ENCODE measurements at regions of chrX and their contacts with region 1.

Region 1: DNA sequence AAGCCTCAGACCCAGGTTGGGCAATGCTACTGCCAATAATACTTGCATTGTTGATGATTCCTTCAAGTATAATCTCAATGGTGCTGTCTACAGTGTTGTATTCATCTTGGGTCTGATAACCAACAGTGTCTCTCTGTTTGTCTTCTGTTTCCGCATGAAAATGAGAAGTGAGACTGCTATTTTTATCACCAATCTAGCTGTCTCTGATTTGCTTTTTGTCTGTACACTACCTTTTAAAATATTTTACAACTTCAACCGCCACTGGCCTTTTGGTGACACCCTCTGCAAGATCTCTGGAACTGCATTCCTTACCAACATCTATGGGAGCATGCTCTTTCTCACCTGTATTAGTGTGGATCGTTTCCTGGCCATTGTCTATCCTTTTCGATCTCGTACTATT is 7.4 kb downstream of the LPAR4 start:
- DNase-seq: peak; percentile 61
- ATAC-seq: peak; percentile 95
- H3K4me3 ChIP-seq: peak overlapping the region; percentile 34 to 53 (median 40)
- H3K4me3 Mint-ChIP-seq: peak overlapping the region; percentile 80
- H3K27ac ChIP-seq: peak overlapping the region; percentile 62 to 70
- H3K27ac Mint-ChIP-seq: peak overlapping the region; percentile 92
- H3K4me1 ChIP-seq: peaks cover 38 to 42% of the 10 kb centered on the region in 2 donors
- H3K4me1 Mint-ChIP-seq: peaks cover 40% of the 10 kb centered on the region
- H3K27me3 ChIP-seq: no peaks in the 10 kb centered on the region
- H3K27me3 Mint-ChIP-seq: no peaks in the 10 kb centered on the region
- CTCF ChIP-seq: no peak

Region 2: GRCh38 chrX:78139160-78140123 is 615.5 kb before region 1 on chrX and contains the start of gene TAF9B:
- CTCF ChIA-PET with region 1: no interaction called
- POLR2A ChIA-PET with region 1: no interaction called
- intact Hi-C with region 1: loop called (anchors 10 kb)
- DNase-seq: peak; percentile 77
- ATAC-seq: peak; percentile 95
- H3K4me3 ChIP-seq: peak within 1 kb of the TSS; percentile 34 to 83 (median 77)
- H3K4me3 Mint-ChIP-seq: peak within 1 kb of the TSS; percentile 95
- H3K27ac ChIP-seq: peak within 1 kb of the TSS; percentile 44 to 71
- H3K27ac Mint-ChIP-seq: peak within 1 kb of the TSS; percentile 90
- H3K4me1 ChIP-seq: peaks cover 0 to 3% of the 10 kb centered on the region in 2 donors
- H3K4me1 Mint-ChIP-seq: peaks cover 6% of the 10 kb centered on the region
- H3K27me3 ChIP-seq: no peaks in the 10 kb centered on the region
- H3K27me3 Mint-ChIP-seq: no peaks in the 10 kb centered on the region
- CTCF ChIP-seq: no peak
- total RNA-seq, gene TAF9B: 12.2 and 13.7 TPM in 2 replicates

Region 3: DNA sequence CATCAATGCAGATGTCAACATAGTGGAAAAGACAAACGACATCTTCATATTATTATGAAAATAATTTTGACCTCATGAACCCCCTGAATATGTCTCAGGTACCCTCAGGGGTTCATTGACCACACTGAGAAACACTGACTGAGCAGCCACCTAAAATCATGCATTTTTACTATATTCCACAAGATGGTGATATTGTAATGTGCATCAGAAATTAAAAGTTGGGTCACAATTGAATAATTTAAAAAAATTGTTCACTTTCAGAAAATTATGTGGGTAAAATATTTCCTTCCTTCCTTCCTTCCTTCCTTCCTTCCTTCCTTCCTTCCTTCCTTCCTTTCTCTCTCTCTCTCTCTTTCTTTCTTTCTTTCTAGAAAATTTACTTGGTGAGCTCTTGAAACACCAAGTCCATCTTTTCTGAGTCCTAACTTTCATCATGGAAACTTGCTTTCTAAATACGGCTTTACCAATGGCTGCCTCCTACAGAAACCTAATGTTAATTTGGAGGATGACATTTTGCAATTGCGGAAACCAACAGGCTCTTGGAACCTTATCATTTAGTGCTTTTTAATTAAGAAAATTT is 199.4 kb before region 1 on chrX:
- CTCF ChIA-PET with region 1: interaction called, 8 read pairs
- POLR2A ChIA-PET with region 1: no interaction called
- intact Hi-C with region 1: loop called (anchors 2 kb)
- DNase-seq: peak; percentile 44
- ATAC-seq: no peak
- H3K4me3 ChIP-seq: no peak overlapping the region
- H3K4me3 Mint-ChIP-seq: no peak overlapping the region
- H3K27ac ChIP-seq: no peak overlapping the region
- H3K27ac Mint-ChIP-seq: no peak overlapping the region
- H3K4me1 ChIP-seq: no peaks in the 10 kb centered on the region
- H3K4me1 Mint-ChIP-seq: peaks cover 17% of the 10 kb centered on the region
- H3K27me3 ChIP-seq: no peaks in the 10 kb centered on the region
- H3K27me3 Mint-ChIP-seq: no peaks in the 10 kb centered on the region
- CTCF ChIP-seq: peak; percentile 58

Region 4: DNA sequence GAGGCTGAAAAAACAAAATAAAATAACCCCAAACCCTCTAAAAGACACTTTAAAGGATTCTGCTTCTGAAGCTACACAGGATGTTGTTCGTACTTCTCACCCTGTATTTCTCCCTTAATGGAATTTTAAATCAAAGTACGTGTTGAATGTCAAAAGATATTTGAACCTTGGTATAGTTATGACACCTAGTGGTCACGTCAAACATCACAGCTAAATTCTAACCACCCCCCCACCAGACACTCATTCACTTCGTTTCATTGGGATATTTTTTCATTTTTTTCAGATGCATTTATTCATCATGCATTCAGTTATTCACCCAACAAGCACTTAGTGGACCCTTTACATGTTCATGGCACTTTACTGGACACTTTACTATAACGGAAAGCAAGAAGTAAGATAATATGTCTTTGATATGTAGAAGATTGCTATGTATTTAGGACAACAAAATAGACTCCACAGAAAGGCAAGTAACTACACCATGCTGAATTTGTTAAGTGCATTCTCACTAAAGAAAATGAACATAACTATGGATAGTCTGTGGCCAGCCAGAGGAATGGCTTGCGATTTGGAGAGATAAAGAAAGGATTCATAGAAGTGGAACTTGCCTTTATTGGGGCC is 327.1 kb after region 1 on chrX:
- CTCF ChIA-PET with region 1: interaction called, 4 read pairs
- POLR2A ChIA-PET with region 1: no interaction called
- intact Hi-C with region 1: loop called (anchors 5 kb)
- DNase-seq: peak; percentile 69
- ATAC-seq: peak; percentile 78
- H3K4me3 ChIP-seq: peak overlapping the region in 2 of 5 experiments; percentile 12 to 26
- H3K4me3 Mint-ChIP-seq: peak overlapping the region; percentile 55
- H3K27ac ChIP-seq: peak overlapping the region in 1 of 2 donors; percentile 32
- H3K27ac Mint-ChIP-seq: peak overlapping the region; percentile 51
- H3K4me1 ChIP-seq: peaks cover 4 to 9% of the 10 kb centered on the region in 2 donors
- H3K4me1 Mint-ChIP-seq: peaks cover 10% of the 10 kb centered on the region
- H3K27me3 ChIP-seq: no peaks in the 10 kb centered on the region
- H3K27me3 Mint-ChIP-seq: no peaks in the 10 kb centered on the region
- CTCF ChIP-seq: peak; percentile 70

Region 5: DNA sequence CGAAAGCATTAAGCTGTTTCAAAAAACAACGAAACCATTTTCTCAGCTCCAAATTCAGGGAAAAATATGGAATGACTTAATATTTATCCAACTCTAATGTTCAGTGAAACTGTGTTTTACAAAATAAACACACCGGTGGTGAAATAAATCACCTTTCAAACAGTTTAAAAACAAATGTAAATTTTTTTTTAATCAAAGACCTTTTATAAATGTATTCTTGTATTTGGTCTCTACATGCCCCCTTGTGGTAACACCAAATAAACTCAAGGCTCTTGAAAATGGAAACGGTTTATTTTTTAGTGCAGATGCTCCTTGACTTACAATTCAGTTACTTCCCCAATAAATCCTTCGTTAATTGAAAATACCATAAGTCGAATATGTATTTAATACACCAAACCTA is 658.1 kb after region 1 on chrX:
- CTCF ChIA-PET with region 1: interaction called, 3 read pairs
- POLR2A ChIA-PET with region 1: no interaction called
- intact Hi-C with region 1: loop called (anchors 10 kb)
- DNase-seq: peak; percentile 24
- ATAC-seq: no peak
- H3K4me3 ChIP-seq: no peak overlapping the region
- H3K4me3 Mint-ChIP-seq: no peak overlapping the region
- H3K27ac ChIP-seq: no peak overlapping the region
- H3K27ac Mint-ChIP-seq: no peak overlapping the region
- H3K4me1 ChIP-seq: no peaks in the 10 kb centered on the region
- H3K4me1 Mint-ChIP-seq: peaks cover under 1% of the 10 kb centered on the region
- H3K27me3 ChIP-seq: no peaks in the 10 kb centered on the region
- H3K27me3 Mint-ChIP-seq: no peaks in the 10 kb centered on the region
- CTCF ChIP-seq: peak; percentile 47